Activated CD4-positive, alpha-beta memory T cell treated with anti-CD3 and anti-CD28 coated beads for 36 hours (primary cell): ENCODE measurements at regions of chr20 and their contacts with region 1.

Region 1: DNA sequence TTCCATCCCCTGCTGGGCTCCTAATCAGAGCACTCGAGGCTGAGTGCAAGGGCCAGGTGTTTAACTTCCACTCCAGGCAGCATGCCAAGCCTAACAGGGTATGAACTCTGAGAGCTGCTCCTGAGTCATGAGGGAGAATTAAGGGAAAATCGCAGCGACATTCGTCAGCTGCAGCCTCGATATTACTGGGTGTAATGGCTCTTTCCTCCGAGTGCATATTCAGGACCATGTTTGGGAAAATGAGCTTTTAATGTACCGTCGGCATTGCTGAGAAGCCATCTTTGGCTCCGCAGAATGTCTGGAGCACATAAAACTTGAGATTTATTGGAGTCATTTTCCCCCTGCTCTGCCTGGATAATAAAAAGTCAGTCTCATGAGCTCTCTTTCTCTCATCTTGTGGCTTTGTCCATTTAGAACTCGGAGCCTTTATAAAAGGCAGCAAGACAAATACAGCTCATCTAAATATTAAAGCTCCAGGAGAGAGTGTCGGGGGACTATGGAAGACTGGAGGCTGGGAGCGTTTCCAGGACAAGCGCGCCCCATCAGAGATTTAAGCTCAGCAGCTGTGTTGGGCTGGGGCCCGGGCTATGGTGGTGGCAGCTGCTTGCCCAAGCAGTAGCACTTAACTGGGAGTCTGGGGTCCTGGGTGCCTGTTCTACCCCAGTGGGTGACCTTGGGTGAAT is 103.7 kb downstream of the TOX2 start:
- DNase-seq: no peak
- H3K4me3 Mint-ChIP-seq: no peak overlapping the region
- H3K27ac Mint-ChIP-seq: no peak overlapping the region
- H3K4me1 Mint-ChIP-seq: peaks cover 29% of the 10 kb centered on the region
- H3K27me3 Mint-ChIP-seq: peaks cover 19% of the 10 kb centered on the region

Region 2: DNA sequence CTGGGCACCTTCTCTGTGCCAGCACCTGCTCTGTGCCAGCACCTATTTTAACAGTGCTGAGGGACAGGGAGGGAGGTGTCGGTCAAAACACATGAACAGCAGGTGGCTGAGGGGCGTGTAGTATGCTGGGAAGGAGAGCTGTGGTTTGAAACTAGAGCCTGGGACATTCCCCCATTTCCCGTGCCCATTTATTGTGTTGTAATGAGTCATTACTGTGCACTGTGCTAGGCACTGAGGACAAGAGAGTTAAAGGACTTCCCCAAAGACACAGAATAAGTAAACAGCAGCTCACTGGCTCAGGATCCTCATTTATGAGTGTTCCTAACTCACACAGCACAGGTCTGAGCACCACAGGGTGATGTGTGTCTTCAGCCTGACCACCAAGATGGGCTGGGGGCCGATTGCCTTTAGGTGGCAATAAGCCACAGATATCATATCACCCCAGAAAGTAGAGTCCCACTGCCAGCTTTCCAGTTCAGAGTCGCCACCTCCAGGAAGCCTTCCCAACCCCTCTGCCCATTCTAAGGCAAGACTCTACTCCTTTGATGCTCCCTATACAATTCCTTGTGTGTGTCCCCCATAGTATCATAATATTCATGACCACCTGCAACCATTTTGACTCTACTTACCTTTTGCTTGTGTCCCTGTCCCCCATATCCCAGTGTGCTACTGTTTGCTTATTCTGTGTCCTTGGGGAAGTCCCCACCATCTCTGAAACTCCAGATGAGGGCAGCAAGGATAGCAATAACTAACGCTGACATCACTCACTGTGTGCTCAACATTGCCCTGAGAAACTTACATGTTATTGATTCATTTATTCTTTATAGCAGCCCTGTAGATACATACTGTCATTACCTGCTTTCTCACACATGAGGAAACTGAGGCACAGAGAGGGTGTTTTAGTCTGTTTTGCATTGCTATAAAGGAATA is 16.5 kb before region 1 on chr20:
- CTCF ChIA-PET with region 1: no interaction called
- POLR2A ChIA-PET with region 1: no interaction called
- intact Hi-C with region 1: loop called (anchors 2 kb)
- DNase-seq: peak; percentile 49
- H3K4me3 Mint-ChIP-seq: no peak overlapping the region
- H3K27ac Mint-ChIP-seq: no peak overlapping the region
- H3K4me1 Mint-ChIP-seq: peaks cover 12% of the 10 kb centered on the region
- H3K27me3 Mint-ChIP-seq: peaks cover 5% of the 10 kb centered on the region

Region 3: DNA sequence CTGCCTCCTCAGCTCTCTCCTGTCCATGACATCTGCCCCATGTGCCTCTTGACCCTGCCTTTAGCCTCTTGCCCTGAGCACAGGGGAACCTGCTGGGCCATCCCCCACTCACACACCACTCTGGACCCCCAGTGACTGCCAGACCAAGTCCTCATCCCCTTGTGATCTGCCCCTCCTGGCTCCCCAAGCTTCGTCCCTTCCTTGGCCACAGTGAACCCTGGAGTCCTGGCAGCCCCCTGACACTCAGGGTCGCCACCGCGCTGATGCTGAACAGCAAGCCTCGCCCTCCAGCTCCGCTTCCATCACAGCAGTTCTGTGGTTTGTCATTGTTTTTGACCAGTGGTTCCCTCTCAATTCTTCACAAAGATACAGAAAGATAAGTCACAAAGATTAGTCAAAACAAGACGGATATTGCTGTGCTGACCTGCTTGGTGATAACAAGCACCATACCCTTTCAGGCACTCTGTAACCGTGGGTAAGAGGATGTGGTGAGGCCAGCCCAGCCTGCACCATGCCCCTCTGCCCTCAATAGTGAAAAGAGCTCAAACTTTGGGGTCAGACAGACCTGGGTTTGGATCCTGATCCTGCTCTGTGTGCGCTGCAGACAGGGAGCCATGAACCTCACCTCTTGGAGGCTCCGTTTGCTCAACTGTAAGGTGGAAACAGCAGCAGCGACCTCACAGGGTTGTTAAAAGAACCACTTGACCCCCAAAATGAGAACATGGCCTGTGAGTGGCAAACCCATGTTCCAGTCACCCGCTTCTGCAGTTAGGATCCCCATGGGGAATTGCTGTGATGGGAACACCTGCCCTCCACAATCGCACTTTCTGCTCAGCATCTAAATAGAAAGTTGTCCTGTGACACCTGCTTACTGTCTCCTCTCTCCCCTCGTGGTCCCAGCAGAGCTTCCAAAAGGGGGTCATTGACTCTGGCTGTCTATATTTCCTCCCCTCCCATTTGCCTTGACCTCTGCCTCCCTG is 10.8 kb after region 1 on chr20:
- CTCF ChIA-PET with region 1: interaction called, 3 read pairs
- POLR2A ChIA-PET with region 1: no interaction called
- intact Hi-C with region 1: loop called (anchors 1 kb)
- DNase-seq: peak; percentile 71
- H3K4me3 Mint-ChIP-seq: peak overlapping the region; percentile 46
- H3K27ac Mint-ChIP-seq: peak overlapping the region; percentile 3
- H3K4me1 Mint-ChIP-seq: peaks cover 39% of the 10 kb centered on the region
- H3K27me3 Mint-ChIP-seq: peaks cover 20% of the 10 kb centered on the region

Region 4: DNA sequence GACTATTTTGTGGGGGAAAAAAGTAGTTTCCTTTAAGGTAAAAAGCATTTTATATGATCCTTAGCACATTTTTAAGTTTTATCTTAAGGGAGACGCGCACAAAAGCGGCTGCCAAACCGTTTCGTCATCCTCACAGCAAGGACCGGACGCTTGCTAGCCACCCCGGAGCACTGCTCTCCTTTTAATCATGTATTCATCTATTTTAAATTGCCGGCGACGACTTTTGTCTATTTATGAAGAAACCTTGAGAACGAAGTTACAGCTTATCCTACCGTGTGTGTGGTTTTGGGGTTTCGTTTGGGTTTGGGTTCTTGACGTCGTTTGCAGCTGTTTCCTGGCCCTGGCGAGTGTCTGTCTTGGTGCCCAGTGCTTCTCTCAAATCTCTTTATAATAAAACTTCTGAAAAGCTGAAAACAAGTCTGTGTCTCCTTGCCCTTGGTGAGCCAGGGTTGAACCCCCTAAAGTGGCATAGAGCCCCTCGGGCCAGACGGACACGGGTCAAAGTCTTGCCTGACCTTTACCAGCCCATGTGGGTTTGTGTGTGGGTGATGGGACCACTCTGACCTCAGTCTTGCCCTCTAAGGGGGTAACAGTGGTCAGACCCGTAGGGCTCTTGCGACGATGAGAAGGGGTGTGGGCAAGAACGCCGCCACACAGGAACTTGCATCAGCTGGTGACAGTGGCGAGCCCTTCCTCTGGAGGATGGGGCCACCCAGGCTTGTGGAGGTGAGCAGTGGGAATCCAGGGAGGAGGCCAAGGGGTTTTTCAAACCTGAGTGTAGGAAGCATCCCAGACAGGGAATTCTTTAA is 51.0 kb after region 1 on chr20:
- CTCF ChIA-PET with region 1: no interaction called
- POLR2A ChIA-PET with region 1: no interaction called
- intact Hi-C with region 1: no loop called
- DNase-seq: peak; percentile 74
- H3K4me3 Mint-ChIP-seq: peak overlapping the region; percentile 65
- H3K27ac Mint-ChIP-seq: peak overlapping the region; percentile 84
- H3K4me1 Mint-ChIP-seq: peaks cover 50% of the 10 kb centered on the region
- H3K27me3 Mint-ChIP-seq: no peaks in the 10 kb centered on the region